CD4-positive, alpha-beta T cell (primary cell): ENCODE measurements at regions of chr9 and their contacts with region 1.

Region 1: DNA sequence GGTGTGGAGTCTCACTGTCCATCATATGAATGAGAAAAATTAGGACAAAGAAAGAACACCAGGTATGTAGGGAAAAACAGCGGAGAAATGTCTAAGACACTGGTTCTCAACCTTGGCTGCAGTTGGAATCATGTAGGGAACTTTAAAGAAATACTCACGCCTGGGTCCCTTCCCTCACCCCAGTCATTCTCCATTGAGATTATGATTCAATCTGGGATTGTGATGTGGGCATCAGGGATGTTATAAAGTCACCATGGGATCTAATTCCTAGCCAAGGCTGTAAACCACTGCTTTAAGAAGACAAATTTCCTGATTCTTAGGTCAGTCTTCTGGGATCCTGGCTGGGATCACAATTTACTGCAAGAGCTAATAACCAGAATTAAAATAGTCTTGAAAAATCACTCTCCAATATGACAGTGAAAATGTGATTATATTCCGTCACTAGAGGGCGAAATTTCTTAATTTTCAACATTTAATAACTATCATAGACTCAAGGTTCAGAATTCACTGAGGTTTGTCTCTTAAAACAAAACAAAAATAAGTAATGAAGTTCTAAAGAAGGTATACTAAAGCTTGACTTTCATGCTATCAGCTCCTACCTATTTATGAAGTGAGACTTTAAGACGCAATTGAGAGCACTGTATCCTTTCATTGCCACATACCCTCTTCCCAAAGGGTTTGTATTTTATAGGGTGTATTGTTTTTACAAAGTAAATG is 60.5 kb downstream of the GLDC start:
- DNase-seq: peak in 3 of 14 experiments; percentile 34 to 54 (median 45)
- ATAC-seq: no peak
- H3K4me3 ChIP-seq: no peak overlapping the region
- H3K4me3 Mint-ChIP-seq: no peak overlapping the region
- H3K27ac ChIP-seq: no peak overlapping the region
- H3K27ac Mint-ChIP-seq: no peak overlapping the region
- H3K4me1 ChIP-seq: no peaks in the 10 kb centered on the region
- H3K4me1 Mint-ChIP-seq: no peaks in the 10 kb centered on the region
- H3K27me3 ChIP-seq: no peaks in the 10 kb centered on the region
- H3K27me3 Mint-ChIP-seq: peaks cover 1% of the 10 kb centered on the region
- CTCF ChIP-seq: peak; percentile 65

Region 2: DNA sequence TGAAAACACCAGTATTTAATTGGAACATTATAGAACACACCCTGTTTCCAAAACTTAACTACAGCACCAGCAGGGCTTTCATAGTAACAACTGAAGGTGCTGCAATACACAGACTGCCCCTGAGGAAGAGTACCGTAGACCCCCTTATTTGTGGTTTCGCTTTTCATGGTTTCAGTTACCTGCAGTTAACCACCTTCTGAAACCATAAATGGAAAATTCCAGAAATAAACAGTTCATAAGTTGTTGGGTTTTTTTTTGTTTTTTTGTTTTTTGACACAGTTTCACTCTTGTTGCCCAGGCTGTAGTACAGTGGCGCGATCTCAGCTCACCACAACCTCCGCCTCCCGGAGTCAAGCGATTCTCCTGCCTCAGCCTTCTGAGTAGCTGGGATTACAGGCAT is 70.0 kb after region 1 on chr9:
- CTCF ChIA-PET with region 1: no interaction called
- POLR2A ChIA-PET with region 1: no interaction called
- intact Hi-C with region 1: no loop called
- DNase-seq: no peak
- ATAC-seq: no peak
- H3K4me3 ChIP-seq: no peak overlapping the region
- H3K4me3 Mint-ChIP-seq: peak overlapping the region; percentile 45
- H3K27ac ChIP-seq: no peak overlapping the region
- H3K27ac Mint-ChIP-seq: no peak overlapping the region
- H3K4me1 ChIP-seq: no peaks in the 10 kb centered on the region
- H3K4me1 Mint-ChIP-seq: peaks cover 5% of the 10 kb centered on the region
- H3K27me3 ChIP-seq: no peaks in the 10 kb centered on the region
- H3K27me3 Mint-ChIP-seq: peaks cover 28% of the 10 kb centered on the region
- CTCF ChIP-seq: no peak

Region 3: DNA sequence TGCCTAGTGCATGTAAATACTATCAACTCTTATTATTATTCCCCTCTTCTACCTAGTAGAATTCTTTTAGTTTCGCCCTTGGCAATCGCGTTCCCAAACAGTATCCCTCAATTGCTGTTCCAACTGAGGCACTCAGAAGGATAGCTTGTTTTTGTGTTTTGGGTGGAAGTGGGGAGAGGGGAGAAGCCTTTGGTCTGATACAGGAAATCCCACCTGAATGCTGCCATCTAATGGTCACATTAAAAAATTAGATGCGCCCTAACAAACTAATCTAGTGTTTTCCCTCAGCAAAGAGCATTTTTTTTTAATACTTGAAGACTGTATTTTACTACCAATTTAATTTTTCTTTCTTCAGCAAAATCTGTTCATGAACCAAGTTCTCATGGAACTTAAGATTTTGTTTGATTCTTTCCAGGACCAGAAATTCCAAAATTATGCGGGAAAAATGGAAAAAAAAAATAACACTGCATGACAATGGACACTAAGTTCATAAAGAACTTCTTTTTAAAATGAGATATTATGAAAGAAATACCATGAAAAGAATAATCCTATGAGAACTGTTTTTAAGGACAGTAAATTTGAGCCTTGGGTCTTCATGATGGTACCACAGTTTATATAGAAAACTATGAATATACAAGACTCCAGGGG is 82.7 kb after region 1 on chr9:
- CTCF ChIA-PET with region 1: no interaction called
- POLR2A ChIA-PET with region 1: no interaction called
- intact Hi-C with region 1: loop called in 1 of 2 experiments (anchors 5 kb)
- DNase-seq: peak in 3 of 14 experiments; percentile 24 to 39 (median 34)
- ATAC-seq: no peak
- H3K4me3 ChIP-seq: no peak overlapping the region
- H3K4me3 Mint-ChIP-seq: no peak overlapping the region
- H3K27ac ChIP-seq: no peak overlapping the region
- H3K27ac Mint-ChIP-seq: no peak overlapping the region
- H3K4me1 ChIP-seq: no peaks in the 10 kb centered on the region
- H3K4me1 Mint-ChIP-seq: no peaks in the 10 kb centered on the region
- H3K27me3 ChIP-seq: no peaks in the 10 kb centered on the region
- H3K27me3 Mint-ChIP-seq: no peaks in the 10 kb centered on the region
- CTCF ChIP-seq: peak; percentile 49

Region 4: GRCh38 chr9:6686396-6686795 is 101.4 kb after region 1 on chr9:
- CTCF ChIA-PET with region 1: no interaction called
- POLR2A ChIA-PET with region 1: no interaction called
- intact Hi-C with region 1: loop called (anchors 1 to 5 kb)
- DNase-seq: peak in 1 of 14 experiments; percentile 6
- ATAC-seq: no peak
- H3K4me3 ChIP-seq: no peak overlapping the region
- H3K4me3 Mint-ChIP-seq: no peak overlapping the region
- H3K27ac ChIP-seq: no peak overlapping the region
- H3K27ac Mint-ChIP-seq: no peak overlapping the region
- H3K4me1 ChIP-seq: peaks cover 11% of the 10 kb centered on the region
- H3K4me1 Mint-ChIP-seq: peaks cover 7% of the 10 kb centered on the region
- H3K27me3 ChIP-seq: no peaks in the 10 kb centered on the region
- H3K27me3 Mint-ChIP-seq: no peaks in the 10 kb centered on the region
- CTCF ChIP-seq: peak; percentile 9

Region 5: GRCh38 chr9:6739218-6739617 is 154.2 kb after region 1 on chr9:
- CTCF ChIA-PET with region 1: no interaction called
- POLR2A ChIA-PET with region 1: no interaction called
- intact Hi-C with region 1: loop called in 1 of 2 experiments (anchors 5 kb)
- DNase-seq: no peak
- ATAC-seq: no peak
- H3K4me3 ChIP-seq: no peak overlapping the region
- H3K4me3 Mint-ChIP-seq: no peak overlapping the region
- H3K27ac ChIP-seq: no peak overlapping the region
- H3K27ac Mint-ChIP-seq: no peak overlapping the region
- H3K4me1 ChIP-seq: no peaks in the 10 kb centered on the region
- H3K4me1 Mint-ChIP-seq: no peaks in the 10 kb centered on the region
- H3K27me3 ChIP-seq: no peaks in the 10 kb centered on the region
- H3K27me3 Mint-ChIP-seq: no peaks in the 10 kb centered on the region
- CTCF ChIP-seq: no peak

Region 6: DNA sequence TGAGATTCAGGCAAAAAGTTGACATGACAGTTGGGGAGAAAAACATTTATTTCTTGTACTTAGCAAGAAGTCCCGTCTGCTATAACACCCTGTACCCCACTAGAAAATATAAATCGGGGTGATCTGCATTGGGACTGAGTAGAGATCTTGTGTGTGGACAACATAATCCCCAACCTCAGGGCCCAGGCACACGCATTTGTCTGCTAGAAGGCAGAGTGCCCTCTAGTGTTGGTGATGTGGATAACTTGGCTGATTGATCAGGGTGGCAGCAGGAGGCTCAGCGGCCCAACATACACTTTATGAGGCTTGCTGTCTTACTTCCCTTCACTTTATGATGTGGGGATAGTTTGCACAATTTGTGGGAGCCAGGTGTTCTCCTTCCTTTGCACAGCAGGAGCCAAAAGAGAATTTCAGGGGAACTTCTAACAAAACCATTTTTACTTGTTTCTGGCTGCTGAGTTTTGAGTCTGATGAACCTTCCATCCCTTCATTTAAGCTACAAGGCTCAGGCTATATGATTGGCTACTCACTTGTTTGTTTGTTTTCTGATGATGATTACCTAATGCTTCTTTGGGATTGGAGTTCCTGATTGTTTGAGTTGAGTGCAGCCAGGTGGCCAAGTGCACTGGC is 951.4 kb after region 1 on chr9:
- CTCF ChIA-PET with region 1: no interaction called
- POLR2A ChIA-PET with region 1: no interaction called
- intact Hi-C with region 1: loop called in 1 of 2 experiments (anchors 10 kb)
- DNase-seq: peak in 4 of 14 experiments; percentile 13 to 41 (median 30)
- ATAC-seq: no peak
- H3K4me3 ChIP-seq: no peak overlapping the region
- H3K4me3 Mint-ChIP-seq: no peak overlapping the region
- H3K27ac ChIP-seq: no peak overlapping the region
- H3K27ac Mint-ChIP-seq: no peak overlapping the region
- H3K4me1 ChIP-seq: no peaks in the 10 kb centered on the region
- H3K4me1 Mint-ChIP-seq: no peaks in the 10 kb centered on the region
- H3K27me3 ChIP-seq: no peaks in the 10 kb centered on the region
- H3K27me3 Mint-ChIP-seq: peaks cover 4% of the 10 kb centered on the region
- CTCF ChIP-seq: peak; percentile 41